Right ventricle myocardium superior (tissue), 1 donor: ENCODE measurements at regions of chr17 and their contacts with region 1.

Region 1: DNA sequence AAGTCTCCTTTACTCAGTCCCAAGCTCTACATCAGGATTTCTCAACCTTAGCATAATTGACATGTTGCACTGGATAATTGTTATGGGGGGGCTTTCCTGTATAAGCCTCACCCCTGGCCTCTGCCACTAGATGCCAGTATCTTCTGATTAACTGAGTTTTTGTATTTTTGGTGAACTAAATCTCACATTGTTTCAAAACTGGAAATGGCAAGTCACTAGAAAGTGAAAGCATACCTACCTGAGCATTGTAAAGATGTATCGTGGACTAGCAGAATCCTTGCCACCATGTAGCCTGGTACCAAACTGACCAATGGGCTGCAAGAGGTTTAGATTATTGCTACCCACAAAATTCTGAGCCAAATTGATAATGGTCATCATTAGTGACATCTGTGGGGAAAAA is 15.0 kb downstream of the TOP2A start:
- DNase-seq: no peak
- ATAC-seq: no peak

Region 2: GRCh38 chr17:40479533-40480480 is 77.1 kb after region 1 on chr17:
- intact Hi-C with region 1: loop called (anchors 5 kb)
- DNase-seq: no peak
- ATAC-seq: no peak

Region 3: DNA sequence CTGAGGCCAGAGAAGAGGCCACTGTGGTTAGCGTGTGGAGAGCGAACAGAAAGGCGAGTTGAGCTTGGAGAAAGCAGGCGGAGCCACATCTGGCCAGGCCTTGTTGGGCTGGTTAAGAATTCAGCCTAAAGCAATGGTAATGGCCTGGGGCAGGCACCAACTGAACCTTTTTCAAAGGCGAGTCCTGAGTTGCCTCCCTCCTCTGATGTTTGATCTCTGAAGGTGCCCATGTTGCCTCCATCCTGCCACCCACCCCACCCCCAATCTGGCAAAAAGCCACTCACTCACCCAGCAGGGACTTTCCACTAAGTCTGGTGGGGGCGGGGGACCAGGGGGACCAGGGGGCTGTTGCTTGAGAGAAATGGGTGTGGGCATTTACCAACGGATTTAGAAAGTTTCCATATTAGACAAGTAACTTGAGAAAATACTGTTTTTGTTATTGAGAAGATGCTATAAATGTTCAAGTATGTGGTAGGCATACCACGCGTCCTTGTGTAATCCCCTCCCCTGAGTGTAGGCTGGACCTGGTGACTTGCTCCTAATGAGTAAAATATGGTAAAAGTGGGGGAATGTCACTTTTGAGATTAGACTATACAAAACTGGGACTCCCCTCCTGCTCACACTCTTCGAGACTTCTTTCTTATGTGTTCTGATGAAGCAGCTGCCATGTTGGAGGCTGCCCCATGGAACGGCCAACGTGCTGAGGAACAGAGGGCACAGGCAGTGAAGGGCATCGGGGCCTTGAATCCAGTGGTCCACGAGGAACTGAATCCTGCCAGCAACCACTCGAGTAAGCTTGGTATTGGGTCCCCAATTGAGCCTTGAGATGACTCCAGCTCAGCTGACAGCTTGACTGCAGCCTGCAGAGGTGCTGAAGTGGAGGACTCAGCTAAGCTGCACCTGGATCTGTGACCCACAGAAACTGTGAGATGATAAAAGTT is 128.7 kb after region 1 on chr17:
- intact Hi-C with region 1: loop called (anchors 5 kb)
- DNase-seq: no peak
- ATAC-seq: no peak